CD4-positive, alpha-beta memory T cell (primary cell): ENCODE measurements at regions of chr3 and their contacts with region 1.

Region 1: DNA sequence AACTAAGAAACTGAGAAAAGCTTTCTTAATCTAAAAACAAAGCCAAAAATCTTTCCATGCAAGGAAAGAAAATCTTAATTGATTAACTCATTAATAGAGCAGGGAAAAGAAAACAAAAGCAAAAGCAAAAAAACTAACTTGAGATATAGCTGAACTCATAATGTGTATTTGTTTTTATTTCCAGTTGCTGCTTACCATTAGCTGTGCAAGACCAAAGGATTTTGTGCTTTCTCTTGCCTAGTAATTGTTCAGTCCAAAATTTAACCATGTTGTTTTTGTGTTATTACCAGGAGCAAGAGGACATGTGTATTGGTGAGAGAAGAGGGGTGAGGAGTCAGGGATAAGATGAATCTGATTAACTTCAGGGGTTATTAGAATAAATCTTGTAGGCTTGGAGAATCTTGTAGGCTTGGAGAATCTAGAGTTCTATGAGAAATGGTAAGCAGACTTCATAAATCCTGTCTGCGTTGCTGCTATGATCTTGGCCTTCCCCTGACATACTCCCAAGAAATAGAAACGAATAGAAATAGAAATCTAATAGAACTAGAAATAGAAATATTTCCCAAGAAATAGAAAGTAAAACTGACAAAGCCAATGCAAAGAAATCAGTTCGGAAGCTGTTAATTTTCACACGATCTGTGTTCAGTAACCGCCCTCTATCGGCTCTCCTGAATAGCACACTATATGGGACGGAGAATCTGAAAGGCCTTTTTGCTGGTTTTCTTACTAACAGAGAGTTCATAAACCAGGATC is 72.6 kb upstream of the TNFSF10 start:
- DNase-seq: peak; percentile 50 to 72 (median 67)
- H3K4me3 ChIP-seq: peak overlapping the region in 1 of 2 donors; percentile 44
- H3K4me3 Mint-ChIP-seq: peak overlapping the region; percentile 77 to 93 (median 89)
- H3K27ac ChIP-seq: peak overlapping the region; percentile 54
- H3K27ac Mint-ChIP-seq: peak overlapping the region; percentile 79 to 96 (median 92)
- H3K4me1 ChIP-seq: peaks cover 48% of the 10 kb centered on the region
- H3K4me1 Mint-ChIP-seq: peaks cover 35 to 58% (median 48%) of the 10 kb centered on the region in 4 donors
- H3K27me3 ChIP-seq: no peaks in the 10 kb centered on the region
- H3K27me3 Mint-ChIP-seq: no peaks in the 10 kb centered on the region

Region 2: GRCh38 chr3:172476347-172476746 is 119.5 kb before region 1 on chr3:
- CTCF ChIA-PET with region 1: interaction called, 30 read pairs
- POLR2A ChIA-PET with region 1: interaction called, 6 read pairs
- intact Hi-C with region 1: no loop called
- DNase-seq: no peak
- H3K4me3 ChIP-seq: peak overlapping the region in 1 of 2 donors; percentile 54
- H3K4me3 Mint-ChIP-seq: peak overlapping the region; percentile 67 to 96 (median 90)
- H3K27ac ChIP-seq: peak overlapping the region; percentile 54
- H3K27ac Mint-ChIP-seq: peak overlapping the region in 6 of 7 donors; percentile 32 to 94 (median 86)
- H3K4me1 ChIP-seq: peaks cover 19% of the 10 kb centered on the region
- H3K4me1 Mint-ChIP-seq: peaks cover 14 to 22% (median 16%) of the 10 kb centered on the region in 4 donors
- H3K27me3 ChIP-seq: no peaks in the 10 kb centered on the region
- H3K27me3 Mint-ChIP-seq: peaks cover 0 to 2% of the 10 kb centered on the region in 2 donors

Region 3: DNA sequence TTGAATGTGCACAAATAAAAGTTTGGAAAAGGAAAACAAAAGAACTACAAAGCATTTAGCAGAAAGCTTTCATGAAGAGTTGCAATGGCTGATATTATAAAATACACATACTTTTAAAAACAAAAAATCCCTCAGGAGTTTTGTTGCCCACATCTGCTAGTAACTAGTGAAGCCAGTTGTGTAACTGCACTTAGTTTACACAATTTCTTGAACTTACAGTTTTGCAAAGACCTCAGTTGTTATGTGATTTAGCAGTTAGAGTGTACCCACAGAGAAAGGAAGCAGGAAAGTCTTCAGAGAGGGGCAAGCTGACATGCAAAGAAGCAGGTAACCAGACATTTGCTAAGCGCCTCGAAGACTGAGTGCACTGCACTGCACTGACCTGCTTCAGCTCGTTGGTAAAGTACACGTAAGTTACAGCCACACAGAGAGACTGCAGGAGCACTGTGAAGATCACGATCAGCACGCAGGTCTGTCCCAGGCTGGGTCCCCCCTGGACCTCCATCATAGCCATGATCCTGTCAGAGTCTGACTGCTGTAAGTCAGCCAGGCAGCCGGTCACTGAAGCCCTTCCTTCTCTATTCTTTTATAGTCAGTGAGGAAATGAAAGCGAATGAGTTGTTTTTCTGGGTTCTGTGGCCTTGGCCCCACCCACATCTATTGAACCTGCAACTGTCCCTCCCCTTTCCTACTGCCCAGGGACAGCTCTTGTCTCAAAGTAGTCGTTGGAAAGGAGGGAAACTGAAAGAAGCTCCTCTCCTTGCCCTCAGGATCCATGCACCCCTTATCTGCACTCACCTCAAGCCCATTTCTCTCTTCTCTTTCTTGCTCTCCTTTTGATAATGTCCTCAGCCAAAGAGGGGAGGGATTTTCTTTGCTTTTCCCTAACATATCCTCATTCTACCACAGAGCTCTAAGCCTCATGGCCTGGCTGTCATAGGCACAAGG is 72.7 kb before region 1 on chr3 and contains the start of gene TNFSF10:
- CTCF ChIA-PET with region 1: interaction called, 174 read pairs
- POLR2A ChIA-PET with region 1: interaction called, 166 read pairs
- intact Hi-C with region 1: loop called (anchors 1 kb)
- DNase-seq: peak; percentile 68 to 82 (median 73)
- H3K4me3 ChIP-seq: peak within 1 kb of the TSS; percentile 96 to 98
- H3K4me3 Mint-ChIP-seq: peak within 1 kb of the TSS; percentile 94 to 100 (median 96)
- H3K27ac ChIP-seq: peak within 1 kb of the TSS; percentile 79
- H3K27ac Mint-ChIP-seq: peak within 1 kb of the TSS; percentile 91 to 97 (median 96)
- H3K4me1 ChIP-seq: peaks cover 41% of the 10 kb centered on the region
- H3K4me1 Mint-ChIP-seq: peaks cover 34 to 67% (median 43%) of the 10 kb centered on the region in 4 donors
- H3K27me3 ChIP-seq: no peaks in the 10 kb centered on the region
- H3K27me3 Mint-ChIP-seq: no peaks in the 10 kb centered on the region
- total RNA-seq, gene TNFSF10: 63.4 to 65.6 TPM

Region 4: GRCh38 chr3:172562871-172563863 is 32.6 kb before region 1 on chr3:
- CTCF ChIA-PET with region 1: interaction called, 29 read pairs
- POLR2A ChIA-PET with region 1: interaction called, 18 read pairs
- intact Hi-C with region 1: no loop called
- DNase-seq: peak; percentile 17 to 58 (median 41)
- H3K4me3 ChIP-seq: no peak overlapping the region
- H3K4me3 Mint-ChIP-seq: peak overlapping the region; percentile 74 to 92 (median 90)
- H3K27ac ChIP-seq: peak overlapping the region; percentile 38
- H3K27ac Mint-ChIP-seq: peak overlapping the region; percentile 82 to 98 (median 95)
- H3K4me1 ChIP-seq: peaks cover 27% of the 10 kb centered on the region
- H3K4me1 Mint-ChIP-seq: peaks cover 22 to 30% (median 27%) of the 10 kb centered on the region in 4 donors
- H3K27me3 ChIP-seq: no peaks in the 10 kb centered on the region
- H3K27me3 Mint-ChIP-seq: peaks cover 0 to 1% of the 10 kb centered on the region in 2 donors

Region 5: DNA sequence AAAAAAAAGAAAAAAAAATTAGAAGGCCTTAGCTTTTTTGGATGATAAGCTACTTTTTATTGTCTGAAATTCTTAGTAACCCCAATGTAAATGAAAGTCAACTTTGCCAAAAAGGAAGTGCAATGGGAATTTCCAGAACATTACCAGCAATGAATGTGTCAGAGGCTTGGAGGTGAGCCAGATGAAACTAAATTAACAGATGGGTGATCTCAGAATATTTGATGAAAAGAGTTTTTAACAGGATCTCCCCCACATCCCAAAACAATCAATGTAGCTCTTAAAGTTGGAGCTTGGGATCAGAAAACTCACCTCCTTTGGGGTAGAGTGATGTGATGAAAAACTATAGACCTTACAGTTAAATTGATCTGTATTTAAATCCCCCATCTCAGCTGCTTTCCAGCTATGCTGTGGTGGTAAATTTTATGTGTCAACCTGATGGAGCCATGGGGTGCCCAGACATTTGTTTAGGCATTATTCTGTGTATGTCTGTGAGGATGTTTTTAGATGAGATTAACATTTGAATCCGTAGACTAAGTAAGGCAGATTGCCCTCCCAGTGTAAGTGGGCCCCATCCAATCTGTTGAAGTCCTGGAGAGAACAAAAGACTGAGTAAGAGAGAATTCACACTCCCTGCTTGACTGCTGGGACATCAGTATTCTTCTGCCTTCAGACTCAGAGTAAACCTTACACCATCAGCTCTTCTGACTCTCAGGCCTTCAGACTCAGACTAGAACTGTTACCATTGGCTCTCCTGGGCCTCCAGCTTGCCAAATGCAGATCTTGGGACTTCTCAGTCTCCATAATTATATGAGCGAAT is 11.7 kb after region 1 on chr3:
- CTCF ChIA-PET with region 1: interaction called, 37 read pairs
- POLR2A ChIA-PET with region 1: no interaction called
- intact Hi-C with region 1: no loop called
- DNase-seq: no peak
- H3K4me3 ChIP-seq: no peak overlapping the region
- H3K4me3 Mint-ChIP-seq: no peak overlapping the region
- H3K27ac ChIP-seq: no peak overlapping the region
- H3K27ac Mint-ChIP-seq: no peak overlapping the region
- H3K4me1 ChIP-seq: no peaks in the 10 kb centered on the region
- H3K4me1 Mint-ChIP-seq: no peaks in the 10 kb centered on the region
- H3K27me3 ChIP-seq: no peaks in the 10 kb centered on the region
- H3K27me3 Mint-ChIP-seq: no peaks in the 10 kb centered on the region

Region 6: GRCh38 chr3:172698631-172699030 is 102.8 kb after region 1 on chr3:
- CTCF ChIA-PET with region 1: no interaction called
- POLR2A ChIA-PET with region 1: no interaction called
- intact Hi-C with region 1: no loop called
- DNase-seq: no peak
- H3K4me3 ChIP-seq: no peak overlapping the region
- H3K4me3 Mint-ChIP-seq: no peak overlapping the region
- H3K27ac ChIP-seq: no peak overlapping the region
- H3K27ac Mint-ChIP-seq: no peak overlapping the region
- H3K4me1 ChIP-seq: no peaks in the 10 kb centered on the region
- H3K4me1 Mint-ChIP-seq: peaks cover 0 to 6% (median 2%) of the 10 kb centered on the region in 4 donors
- H3K27me3 ChIP-seq: no peaks in the 10 kb centered on the region
- H3K27me3 Mint-ChIP-seq: no peaks in the 10 kb centered on the region